Sigmoid colon (tissue), 7 donors: ENCODE measurements at regions of chr6 and their contacts with region 1.

Region 1: GRCh38 chr6:27753668-27754407 is 158.4 kb downstream of the OR2B2 start:
- DNase-seq: peak; percentile 84
- H3K4me3 ChIP-seq: peak overlapping the region; percentile 58 to 70 (median 66)
- H3K27ac ChIP-seq: peak overlapping the region in 2 of 4 donors; percentile 12 to 29
- H3K4me1 ChIP-seq: peaks cover 0 to 16% (median 11%) of the 10 kb centered on the region in 4 donors
- H3K27me3 ChIP-seq: peaks cover 5 to 28% (median 23%) of the 10 kb centered on the region in 3 donors
- CTCF ChIP-seq: no peak
- EP300 ChIP-seq: no peak
- POLR2A ChIP-seq: no peak

Region 2: GRCh38 chr6:27177485-27178406 is 576.1 kb before region 1 on chr6:
- intact Hi-C with region 1: loop called (anchors 2 kb)
- DNase-seq: peak; percentile 92
- H3K4me3 ChIP-seq: peak overlapping the region; percentile 80 to 100 (median 96)
- H3K27ac ChIP-seq: peak overlapping the region; percentile 85 to 91 (median 88)
- H3K4me1 ChIP-seq: peaks cover 0 to 13% (median 3%) of the 10 kb centered on the region in 4 donors
- H3K27me3 ChIP-seq: no peaks in the 10 kb centered on the region
- CTCF ChIP-seq: peak in 3 of 4 experiments; percentile 28 to 34 (median 31)
- EP300 ChIP-seq: no peak
- POLR2A ChIP-seq: peak in 1 of 2 donors; percentile 26

Region 3: DNA sequence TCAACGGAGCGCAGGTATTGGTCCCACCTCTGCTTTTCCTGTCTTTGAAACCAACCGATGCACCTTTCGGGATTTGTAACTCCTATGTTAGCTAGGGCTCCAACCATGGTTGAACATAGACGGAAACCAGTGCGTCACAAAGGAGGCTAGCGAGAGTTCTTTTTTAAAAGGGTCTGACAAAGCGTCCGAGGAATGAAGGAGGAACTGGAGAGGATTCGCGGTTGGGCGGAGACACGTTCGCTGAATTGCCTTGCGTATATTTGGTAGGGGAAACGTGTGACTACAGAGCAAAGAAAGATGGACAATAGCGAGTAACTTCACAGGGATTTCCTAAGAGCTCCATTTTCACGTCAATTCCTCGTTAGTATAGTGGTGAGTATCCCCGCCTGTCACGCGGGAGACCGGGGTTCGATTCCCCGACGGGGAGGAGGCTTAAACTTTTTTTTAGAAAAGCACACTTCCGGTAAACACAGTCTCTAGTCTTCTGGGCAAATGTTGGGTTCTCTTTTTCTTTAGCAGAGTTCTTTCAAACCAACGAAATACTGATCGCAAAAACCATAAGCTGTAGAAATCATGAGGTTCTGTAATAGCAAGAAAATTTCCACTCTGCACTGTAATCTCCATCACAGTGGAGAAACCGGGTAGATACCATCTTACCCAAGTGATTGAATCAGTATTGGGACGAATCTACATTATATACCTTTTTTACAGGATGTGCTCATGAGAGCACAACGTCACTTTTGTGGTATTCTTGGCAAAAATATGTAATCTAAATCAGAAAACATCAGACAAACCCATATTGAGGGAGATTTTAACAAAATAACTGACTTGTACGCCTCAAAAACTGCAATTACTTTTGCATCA is 274.3 kb before region 1 on chr6:
- intact Hi-C with region 1: loop called (anchors 1 kb)
- DNase-seq: peak; percentile 91
- H3K4me3 ChIP-seq: peak overlapping the region; percentile 64 to 74 (median 68)
- H3K27ac ChIP-seq: peak overlapping the region; percentile 91 to 96 (median 95)
- H3K4me1 ChIP-seq: peaks cover 0 to 14% (median 9%) of the 10 kb centered on the region in 4 donors
- H3K27me3 ChIP-seq: no peaks in the 10 kb centered on the region
- CTCF ChIP-seq: no peak
- EP300 ChIP-seq: no peak
- POLR2A ChIP-seq: no peak

Region 4: GRCh38 chr6:27687154-27688013 is 66.5 kb before region 1 on chr6:
- intact Hi-C with region 1: loop called (anchors 2 kb)
- DNase-seq: peak; percentile 79
- H3K4me3 ChIP-seq: peak overlapping the region; percentile 34 to 50 (median 42)
- H3K27ac ChIP-seq: peak overlapping the region; percentile 32 to 63 (median 55)
- H3K4me1 ChIP-seq: peaks cover 0 to 16% (median 3%) of the 10 kb centered on the region in 4 donors
- H3K27me3 ChIP-seq: peaks cover 0 to 10% (median 7%) of the 10 kb centered on the region in 3 donors
- CTCF ChIP-seq: peak in 3 of 4 experiments; percentile 22 to 52 (median 25)
- EP300 ChIP-seq: no peak
- POLR2A ChIP-seq: no peak

Region 5: GRCh38 chr6:27902335-27903314 is 148.8 kb after region 1 on chr6:
- intact Hi-C with region 1: loop called (anchors 2 kb)
- DNase-seq: peak; percentile 90
- H3K4me3 ChIP-seq: peak overlapping the region; percentile 45 to 57 (median 51)
- H3K27ac ChIP-seq: peak overlapping the region; percentile 83 to 87 (median 86)
- H3K4me1 ChIP-seq: peaks cover 0 to 4% (median 0%) of the 10 kb centered on the region in 4 donors
- H3K27me3 ChIP-seq: no peaks in the 10 kb centered on the region
- CTCF ChIP-seq: no peak
- EP300 ChIP-seq: no peak
- POLR2A ChIP-seq: no peak